ENCODE measurements at regions of chr19 and their contacts with region 1.

Region 1: DNA sequence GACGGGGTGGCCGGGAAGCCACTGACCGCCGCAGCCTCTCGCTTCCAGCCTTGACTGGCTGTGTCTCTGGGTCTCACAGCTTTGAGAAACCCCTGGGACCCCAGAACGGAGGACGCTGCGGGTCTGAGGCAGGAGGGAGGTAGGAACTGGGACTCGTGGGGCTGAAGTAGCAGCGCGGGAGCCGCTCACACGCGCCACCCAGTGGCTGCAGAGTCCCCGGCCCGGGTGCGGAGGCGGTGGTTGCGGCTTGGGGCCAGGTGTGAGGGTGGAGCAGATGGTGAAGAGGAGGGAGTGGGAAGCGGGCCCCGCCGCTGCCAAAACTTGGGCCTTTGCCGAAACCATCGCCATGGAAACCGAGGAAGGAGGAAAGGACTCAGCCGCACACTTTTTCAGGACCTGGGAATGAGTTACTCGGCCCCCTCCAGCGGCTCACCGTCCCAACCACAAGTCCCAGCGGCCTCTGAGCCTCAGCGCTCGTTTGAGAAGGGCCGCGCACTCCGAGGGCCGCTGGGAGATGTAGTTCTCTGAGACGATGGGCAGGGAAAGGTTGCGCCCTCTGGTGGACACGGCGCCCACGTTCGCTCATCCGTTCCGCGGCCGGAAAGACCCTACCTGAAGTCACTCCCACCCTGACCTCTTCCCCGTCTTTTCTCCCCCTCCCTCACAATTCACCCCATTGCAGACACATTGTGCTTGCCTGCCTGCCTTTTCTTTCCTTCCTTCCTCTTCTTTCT is 2.2 kb upstream of the SLC17A7 start:
- DNase-seq: peak; percentile 88 to 96 (median 93)
- H3K4me3 ChIP-seq: peak overlapping the region; percentile 69
- H3K4me3 Mint-ChIP-seq: peak overlapping the region; percentile 77 to 92 (median 84)
- H3K27ac ChIP-seq: peak overlapping the region; percentile 51
- H3K27ac Mint-ChIP-seq: peak overlapping the region; percentile 66 to 93 (median 86)
- H3K4me1 ChIP-seq: peaks cover 26% of the 10 kb centered on the region
- H3K4me1 Mint-ChIP-seq: peaks cover 32 to 50% (median 37%) of the 10 kb centered on the region in 3 donors
- H3K27me3 ChIP-seq: peaks cover 34% of the 10 kb centered on the region
- H3K27me3 Mint-ChIP-seq: peaks cover 37 to 39% of the 10 kb centered on the region in 2 donors

Region 2: GRCh38 chr19:49391581-49392399 is 51.7 kb before region 1 on chr19:
- CTCF ChIA-PET with region 1: interaction called, 28 read pairs
- POLR2A ChIA-PET with region 1: interaction called, 9 read pairs
- DNase-seq: peak; percentile 63 to 86 (median 71)
- H3K4me3 ChIP-seq: no peak overlapping the region
- H3K4me3 Mint-ChIP-seq: peak overlapping the region in 1 of 7 donors; percentile 37
- H3K27ac ChIP-seq: peak overlapping the region; percentile 21
- H3K27ac Mint-ChIP-seq: peak overlapping the region; percentile 2 to 92 (median 61)
- H3K4me1 ChIP-seq: peaks cover 9% of the 10 kb centered on the region
- H3K4me1 Mint-ChIP-seq: peaks cover 11 to 20% (median 19%) of the 10 kb centered on the region in 3 donors
- H3K27me3 ChIP-seq: no peaks in the 10 kb centered on the region
- H3K27me3 Mint-ChIP-seq: no peaks in the 10 kb centered on the region

Region 3: GRCh38 chr19:49461656-49462055 is 18.1 kb after region 1 on chr19:
- CTCF ChIA-PET with region 1: no interaction called
- POLR2A ChIA-PET with region 1: no interaction called
- DNase-seq: no peak
- H3K4me3 ChIP-seq: no peak overlapping the region
- H3K4me3 Mint-ChIP-seq: no peak overlapping the region
- H3K27ac ChIP-seq: no peak overlapping the region
- H3K27ac Mint-ChIP-seq: no peak overlapping the region
- H3K4me1 ChIP-seq: no peaks in the 10 kb centered on the region
- H3K4me1 Mint-ChIP-seq: peaks cover 2 to 11% (median 5%) of the 10 kb centered on the region in 3 donors
- H3K27me3 ChIP-seq: no peaks in the 10 kb centered on the region
- H3K27me3 Mint-ChIP-seq: no peaks in the 10 kb centered on the region

Region 4: GRCh38 chr19:49487277-49488045 is 43.9 kb after region 1 on chr19 and contains the start of gene RPL13A:
- CTCF ChIA-PET with region 1: no interaction called
- POLR2A ChIA-PET with region 1: no interaction called
- DNase-seq: peak; percentile 99 to 100 (median 99)
- H3K4me3 ChIP-seq: peak within 1 kb of the TSS; percentile 93
- H3K4me3 Mint-ChIP-seq: peak within 1 kb of the TSS; percentile 86 to 99 (median 97)
- H3K27ac ChIP-seq: peak within 1 kb of the TSS; percentile 92
- H3K27ac Mint-ChIP-seq: peak within 1 kb of the TSS; percentile 88 to 97 (median 94)
- H3K4me1 ChIP-seq: peaks cover 38% of the 10 kb centered on the region
- H3K4me1 Mint-ChIP-seq: peaks cover 40 to 59% (median 47%) of the 10 kb centered on the region in 3 donors
- H3K27me3 ChIP-seq: no peaks in the 10 kb centered on the region
- H3K27me3 Mint-ChIP-seq: no peaks in the 10 kb centered on the region
- total RNA-seq, gene RPL13A: 3,865 to 3,912 TPM

Region 5: GRCh38 chr19:49599378-49600295 is 156.1 kb after region 1 on chr19:
- CTCF ChIA-PET with region 1: no interaction called
- POLR2A ChIA-PET with region 1: no interaction called
- DNase-seq: no peak
- H3K4me3 ChIP-seq: no peak overlapping the region
- H3K4me3 Mint-ChIP-seq: no peak overlapping the region
- H3K27ac ChIP-seq: no peak overlapping the region
- H3K27ac Mint-ChIP-seq: no peak overlapping the region
- H3K4me1 ChIP-seq: no peaks in the 10 kb centered on the region
- H3K4me1 Mint-ChIP-seq: peaks cover 10 to 35% (median 13%) of the 10 kb centered on the region in 3 donors
- H3K27me3 ChIP-seq: no peaks in the 10 kb centered on the region
- H3K27me3 Mint-ChIP-seq: no peaks in the 10 kb centered on the region